PC-3 (cell line): ENCODE measurements at regions of chr12 and their contacts with region 1.

Region 1: DNA sequence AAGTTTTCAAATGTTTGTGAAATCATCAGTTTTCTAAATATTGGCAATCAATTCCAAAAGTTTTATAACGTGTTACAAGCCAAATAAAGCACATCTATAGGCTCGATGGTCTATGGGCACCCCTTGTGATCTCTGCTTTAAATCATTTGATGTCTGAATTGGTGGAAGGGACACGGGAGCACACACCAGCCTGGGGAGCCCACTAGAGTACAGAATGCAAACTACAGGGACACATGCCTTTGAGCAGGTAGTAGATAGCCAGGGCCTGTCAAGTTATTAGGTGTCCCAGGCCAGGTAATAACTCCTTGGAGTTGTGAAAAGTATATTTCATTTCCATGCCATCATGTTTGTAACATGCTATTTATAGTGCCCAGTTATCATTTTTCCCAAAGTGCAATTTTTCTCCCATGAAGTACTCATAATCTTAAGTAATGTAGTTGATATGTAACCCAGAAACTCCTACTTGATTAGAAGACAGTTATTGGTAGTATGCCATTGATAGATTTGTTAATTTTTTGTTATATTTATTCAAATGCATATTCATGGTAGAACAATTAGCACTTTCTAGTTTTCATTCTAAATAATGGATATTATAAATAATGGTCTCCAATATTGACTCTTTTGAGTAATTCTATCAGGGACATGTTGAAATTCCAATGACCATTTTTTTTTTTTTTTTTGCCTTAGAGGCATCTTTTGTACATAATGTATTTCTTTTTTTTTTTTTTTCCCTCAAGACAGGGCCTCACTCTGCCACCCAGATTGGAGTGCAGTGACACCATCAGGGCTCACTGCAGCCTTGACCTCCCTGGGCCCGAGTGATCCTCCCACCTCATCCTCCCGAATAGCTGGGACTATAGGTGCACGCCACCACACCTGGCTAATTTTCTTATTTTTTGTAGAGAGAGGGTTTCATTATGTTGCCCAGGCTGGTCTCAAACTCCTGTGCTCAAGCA is 96.9 kb upstream of the FGD4 start:
- DNase-seq: peak; percentile 58
- ATAC-seq: peak; percentile 76
- H3K4me3 ChIP-seq: no peak overlapping the region
- H3K27ac ChIP-seq: no peak overlapping the region
- H3K4me1 ChIP-seq: no peaks in the 10 kb centered on the region
- H3K27me3 ChIP-seq: no peaks in the 10 kb centered on the region
- CTCF ChIP-seq: peak; percentile 68

Region 2: DNA sequence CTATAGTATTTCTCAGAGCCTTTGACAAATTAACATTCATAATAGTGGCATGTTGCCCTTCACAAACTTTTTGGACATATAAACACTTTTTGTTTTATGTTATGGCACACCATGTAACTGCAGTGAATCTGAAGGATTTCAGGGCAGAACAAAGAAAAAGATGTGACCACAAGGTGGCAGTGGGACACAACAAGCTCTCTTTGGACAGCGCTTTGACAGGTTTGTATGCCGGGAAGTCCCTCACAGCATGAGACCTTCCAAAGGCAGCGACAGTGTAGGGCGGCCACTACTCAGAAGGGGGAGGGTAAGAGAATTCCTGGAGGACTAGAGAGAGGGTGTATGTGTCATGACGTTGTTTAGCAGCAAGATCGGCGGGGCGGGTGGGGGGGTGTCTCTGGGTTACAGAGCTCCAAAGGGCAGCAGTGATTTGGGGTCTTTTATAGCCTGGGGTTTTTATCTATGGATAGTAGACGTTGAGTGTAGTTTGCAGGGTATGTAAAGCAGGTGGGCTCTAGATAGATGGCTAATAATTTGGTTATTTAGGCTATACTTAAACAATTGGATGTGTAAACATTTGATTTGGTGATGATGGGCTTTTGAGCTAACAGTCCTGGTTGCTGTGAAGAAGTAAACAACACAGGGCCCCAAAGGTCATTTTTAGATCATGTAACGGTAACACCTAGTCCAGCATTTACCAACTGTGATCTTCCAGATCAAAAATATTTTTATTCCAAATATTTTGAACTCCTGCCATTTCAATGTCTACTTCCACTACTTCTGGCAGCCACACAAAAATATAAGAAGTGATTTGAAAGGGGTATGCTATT is 620.1 kb before region 1 on chr12:
- CTCF ChIA-PET with region 1: no interaction called
- POLR2A ChIA-PET with region 1: no interaction called
- intact Hi-C with region 1: loop called (anchors 2 kb)
- DNase-seq: peak; percentile 80
- ATAC-seq: peak; percentile 66
- H3K4me3 ChIP-seq: no peak overlapping the region
- H3K27ac ChIP-seq: no peak overlapping the region
- H3K4me1 ChIP-seq: no peaks in the 10 kb centered on the region
- H3K27me3 ChIP-seq: no peaks in the 10 kb centered on the region
- CTCF ChIP-seq: peak; percentile 75

Region 3: GRCh38 chr12:32062881-32063280 is 239.6 kb before region 1 on chr12:
- CTCF ChIA-PET with region 1: no interaction called
- POLR2A ChIA-PET with region 1: no interaction called
- intact Hi-C with region 1: loop called (anchors 2 kb)
- DNase-seq: no peak
- ATAC-seq: no peak
- H3K4me3 ChIP-seq: no peak overlapping the region
- H3K27ac ChIP-seq: no peak overlapping the region
- H3K4me1 ChIP-seq: no peaks in the 10 kb centered on the region
- H3K27me3 ChIP-seq: no peaks in the 10 kb centered on the region
- CTCF ChIP-seq: no peak

Region 4: GRCh38 chr12:32181498-32182175 is 120.9 kb before region 1 on chr12:
- CTCF ChIA-PET with region 1: no interaction called
- POLR2A ChIA-PET with region 1: no interaction called
- intact Hi-C with region 1: loop called (anchors 10 kb)
- DNase-seq: no peak
- ATAC-seq: no peak
- H3K4me3 ChIP-seq: no peak overlapping the region
- H3K27ac ChIP-seq: no peak overlapping the region
- H3K4me1 ChIP-seq: peaks cover 32% of the 10 kb centered on the region
- H3K27me3 ChIP-seq: no peaks in the 10 kb centered on the region
- CTCF ChIP-seq: no peak